Activated CD8-positive, alpha-beta T cell treated with anti-CD3 and anti-CD28 coated beads, Interleukin-2, amount 10 ng/mL, durations not matched to agents 7 days and 5 days (primary cell): ENCODE measurements at regions of chr19 and their contacts with region 1.

Region 1: DNA sequence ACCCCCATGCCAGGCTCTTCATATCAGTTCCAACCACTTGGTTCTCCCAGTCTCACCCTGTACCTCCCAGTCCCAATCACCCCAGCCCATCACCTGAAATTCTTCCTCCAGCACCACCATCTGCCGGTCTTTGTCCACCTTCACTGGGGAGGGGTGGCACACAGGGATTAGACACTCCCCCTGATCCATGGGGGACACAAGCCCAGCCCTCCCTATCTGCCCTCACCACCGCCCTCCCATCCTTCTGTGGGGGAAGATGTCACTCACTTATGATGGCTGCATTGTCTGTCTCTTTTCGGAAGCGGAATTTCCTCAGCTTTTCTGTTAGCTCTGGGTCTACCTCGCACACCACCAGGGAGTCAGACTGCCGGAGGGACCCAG is 685 bp downstream of the GMFG start:
- DNase-seq: peak; percentile 57
- ATAC-seq: peak; percentile 55
- H3K4me3 Mint-ChIP-seq: peak overlapping the region; percentile 100
- H3K27ac Mint-ChIP-seq: peak overlapping the region; percentile 98
- H3K4me1 Mint-ChIP-seq: peaks cover 65% of the 10 kb centered on the region
- H3K27me3 Mint-ChIP-seq: no peaks in the 10 kb centered on the region

Region 2: GRCh38 chr19:39124136-39124764 is 210.9 kb before region 1 on chr19:
- CTCF ChIA-PET with region 1: interaction called, 13 read pairs
- POLR2A ChIA-PET with region 1: interaction called, 6 read pairs
- DNase-seq: no peak
- ATAC-seq: no peak
- H3K4me3 Mint-ChIP-seq: peak overlapping the region; percentile 29
- H3K27ac Mint-ChIP-seq: no peak overlapping the region
- H3K4me1 Mint-ChIP-seq: peaks cover 34% of the 10 kb centered on the region
- H3K27me3 Mint-ChIP-seq: peaks cover 2% of the 10 kb centered on the region

Region 3: DNA sequence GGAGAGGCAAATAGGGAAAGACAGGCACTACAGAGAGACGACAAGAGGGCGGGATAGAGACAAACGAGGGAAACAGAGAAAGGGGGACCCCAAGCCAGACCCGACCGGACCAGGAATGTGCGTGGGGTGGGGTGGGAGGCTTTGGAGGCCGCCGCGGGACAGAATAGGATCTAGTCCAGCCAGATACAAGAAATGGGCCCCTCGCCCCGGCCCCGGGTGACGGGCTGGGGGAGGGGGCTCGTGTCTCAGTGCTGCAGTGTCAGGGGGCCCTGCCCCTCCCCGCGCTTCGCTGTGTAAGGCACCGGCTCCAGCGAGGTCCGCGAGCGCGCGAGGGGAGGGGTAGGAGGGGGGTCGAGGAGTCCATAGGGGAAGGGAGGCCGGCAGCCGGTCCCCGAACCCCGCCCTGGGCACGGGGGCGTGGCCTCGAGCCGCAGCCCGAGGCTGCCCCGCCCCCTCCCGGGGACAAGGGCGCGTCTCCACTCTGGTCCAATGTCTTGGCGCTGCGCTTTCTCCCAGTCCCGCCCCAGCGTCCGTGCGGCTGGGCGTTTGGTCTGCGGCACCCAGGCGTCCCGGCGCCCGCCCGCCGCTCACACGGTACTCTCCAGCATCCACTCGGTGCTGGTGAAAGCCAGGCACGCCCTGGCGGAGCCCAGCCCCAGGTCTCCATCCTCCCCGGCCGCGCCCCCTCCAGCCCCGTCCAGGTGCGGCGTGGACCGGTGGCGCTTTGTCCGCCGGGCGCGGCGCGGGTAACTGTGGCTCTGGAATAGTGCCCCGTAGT is 27.9 kb before region 1 on chr19:
- CTCF ChIA-PET with region 1: no interaction called
- POLR2A ChIA-PET with region 1: no interaction called
- DNase-seq: no peak
- ATAC-seq: no peak
- H3K4me3 Mint-ChIP-seq: no peak overlapping the region
- H3K27ac Mint-ChIP-seq: no peak overlapping the region
- H3K4me1 Mint-ChIP-seq: peaks cover 23% of the 10 kb centered on the region
- H3K27me3 Mint-ChIP-seq: peaks cover 7% of the 10 kb centered on the region

Region 4: DNA sequence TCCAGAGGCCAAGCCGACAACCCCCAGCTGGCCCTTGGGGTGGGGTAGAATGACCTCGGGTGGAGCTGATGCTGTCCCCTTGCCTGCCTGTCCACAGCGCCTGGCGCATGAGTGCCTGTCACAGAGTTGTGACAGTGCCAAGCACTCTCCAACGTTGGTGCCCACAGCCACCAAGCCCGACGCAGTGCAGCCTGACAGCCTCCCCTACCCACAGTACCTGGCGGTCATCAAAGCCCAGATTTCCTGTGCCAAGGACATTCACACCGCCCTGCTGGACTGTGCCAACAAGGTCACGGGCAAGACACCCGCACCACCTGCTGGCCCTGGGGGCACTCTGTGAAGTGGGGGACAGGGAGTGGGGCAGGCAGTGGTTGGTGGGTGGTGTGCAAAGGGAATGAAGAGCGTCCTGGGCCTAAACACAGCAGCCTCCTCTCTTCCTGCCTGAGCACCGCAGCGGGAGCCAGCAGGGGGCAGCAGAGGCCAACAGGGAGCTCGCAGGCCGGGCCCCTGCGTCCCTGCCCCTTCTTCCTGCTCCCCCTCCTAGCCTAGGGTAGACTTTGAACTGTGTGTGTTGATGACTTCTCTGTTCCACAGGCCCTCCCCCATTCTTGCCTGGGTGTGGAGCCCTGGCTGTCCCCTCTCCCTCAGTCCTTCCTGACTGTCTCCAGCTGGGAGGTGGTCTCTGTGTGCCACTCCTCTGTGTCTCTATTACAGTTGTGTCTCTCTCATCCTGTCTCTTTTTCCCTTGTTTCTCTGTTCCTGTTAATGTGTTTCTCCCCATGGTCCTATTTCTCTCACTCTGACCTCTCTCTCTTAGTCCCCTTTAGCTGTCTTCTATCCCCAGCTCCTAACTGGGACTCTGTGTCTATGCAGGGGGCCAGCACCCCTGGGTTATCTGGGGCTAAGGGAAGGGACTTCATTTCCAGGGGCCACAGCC is 62.5 kb after region 1 on chr19:
- CTCF ChIA-PET with region 1: interaction called, 6 read pairs
- POLR2A ChIA-PET with region 1: interaction called, 11 read pairs
- DNase-seq: peak; percentile 95
- ATAC-seq: peak; percentile 70
- H3K4me3 Mint-ChIP-seq: peak overlapping the region; percentile 2
- H3K27ac Mint-ChIP-seq: peak overlapping the region; percentile 82
- H3K4me1 Mint-ChIP-seq: peaks cover 70% of the 10 kb centered on the region
- H3K27me3 Mint-ChIP-seq: no peaks in the 10 kb centered on the region